ENCODE measurements at regions of chr2 and their contacts with region 1.

Region 1: GRCh38 chr2:224927646-224928173 is 114.6 kb downstream of the DOCK10 start:
- DNase-seq: peak; percentile 87
- ATAC-seq: peak; percentile 62
- H3K4me3 Mint-ChIP-seq: peak overlapping the region; percentile 46
- H3K27ac Mint-ChIP-seq: peak overlapping the region; percentile 94
- H3K4me1 Mint-ChIP-seq: peaks cover 96% of the 10 kb centered on the region
- H3K27me3 Mint-ChIP-seq: no peaks in the 10 kb centered on the region

Region 2: DNA sequence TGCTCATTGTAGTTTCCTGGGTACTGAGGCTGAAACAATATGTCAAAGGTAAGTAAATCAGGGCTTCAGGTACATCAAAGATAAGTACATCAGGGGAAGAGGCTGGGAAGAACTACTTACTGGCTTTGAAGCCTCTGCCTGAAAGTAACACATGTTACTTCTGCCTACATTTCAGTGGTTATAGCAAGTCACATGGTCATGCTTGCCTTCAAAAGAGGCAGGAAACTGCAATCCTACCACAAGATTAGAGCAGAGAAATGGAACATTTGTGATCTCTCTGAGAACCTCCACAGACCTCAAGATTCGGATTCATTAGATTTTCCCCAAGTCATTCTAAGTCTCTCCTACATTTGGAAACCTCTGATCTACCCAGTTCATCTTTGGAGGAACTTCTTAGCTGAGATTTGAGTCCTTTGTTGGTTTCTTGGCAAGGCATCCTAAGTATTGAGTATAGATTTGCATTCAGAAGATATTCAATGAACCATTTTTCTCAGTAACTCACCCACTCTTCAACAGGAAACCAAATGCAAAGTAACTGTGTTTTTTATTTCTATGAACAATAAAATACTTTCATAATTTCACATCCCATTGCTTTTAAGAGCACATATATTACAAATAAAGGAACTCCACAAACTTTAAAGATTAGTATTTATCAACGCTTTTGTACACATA is 163.0 kb before region 1 on chr2:
- CTCF ChIA-PET with region 1: no interaction called
- DNase-seq: no peak
- ATAC-seq: peak; percentile 23
- H3K4me3 Mint-ChIP-seq: no peak overlapping the region
- H3K27ac Mint-ChIP-seq: no peak overlapping the region
- H3K4me1 Mint-ChIP-seq: peaks cover 20% of the 10 kb centered on the region
- H3K27me3 Mint-ChIP-seq: no peaks in the 10 kb centered on the region

Region 3: DNA sequence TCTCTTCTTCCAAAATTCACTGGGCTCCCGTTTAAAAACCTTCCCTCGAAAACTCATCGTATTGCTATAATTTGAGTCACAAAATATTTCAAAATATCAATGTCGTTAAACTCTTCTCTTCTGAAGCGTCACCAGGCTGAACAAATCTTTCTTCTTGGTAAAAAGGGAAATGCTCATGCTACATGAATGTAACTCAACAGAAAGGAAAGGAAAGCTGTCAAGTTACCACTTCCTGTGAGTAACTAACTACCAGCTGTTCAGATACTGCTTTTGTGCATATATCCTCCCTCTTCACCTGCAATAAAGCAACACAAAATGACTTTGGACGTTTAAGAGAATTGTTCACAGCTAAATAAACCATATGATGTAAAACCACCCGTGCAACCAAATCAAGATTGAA is 19.2 kb after region 1 on chr2:
- CTCF ChIA-PET with region 1: interaction called, 132 read pairs
- DNase-seq: no peak
- ATAC-seq: peak; percentile 66
- H3K4me3 Mint-ChIP-seq: peak overlapping the region; percentile 86
- H3K27ac Mint-ChIP-seq: peak overlapping the region; percentile 96
- H3K4me1 Mint-ChIP-seq: peaks cover 64% of the 10 kb centered on the region
- H3K27me3 Mint-ChIP-seq: no peaks in the 10 kb centered on the region

Region 4: DNA sequence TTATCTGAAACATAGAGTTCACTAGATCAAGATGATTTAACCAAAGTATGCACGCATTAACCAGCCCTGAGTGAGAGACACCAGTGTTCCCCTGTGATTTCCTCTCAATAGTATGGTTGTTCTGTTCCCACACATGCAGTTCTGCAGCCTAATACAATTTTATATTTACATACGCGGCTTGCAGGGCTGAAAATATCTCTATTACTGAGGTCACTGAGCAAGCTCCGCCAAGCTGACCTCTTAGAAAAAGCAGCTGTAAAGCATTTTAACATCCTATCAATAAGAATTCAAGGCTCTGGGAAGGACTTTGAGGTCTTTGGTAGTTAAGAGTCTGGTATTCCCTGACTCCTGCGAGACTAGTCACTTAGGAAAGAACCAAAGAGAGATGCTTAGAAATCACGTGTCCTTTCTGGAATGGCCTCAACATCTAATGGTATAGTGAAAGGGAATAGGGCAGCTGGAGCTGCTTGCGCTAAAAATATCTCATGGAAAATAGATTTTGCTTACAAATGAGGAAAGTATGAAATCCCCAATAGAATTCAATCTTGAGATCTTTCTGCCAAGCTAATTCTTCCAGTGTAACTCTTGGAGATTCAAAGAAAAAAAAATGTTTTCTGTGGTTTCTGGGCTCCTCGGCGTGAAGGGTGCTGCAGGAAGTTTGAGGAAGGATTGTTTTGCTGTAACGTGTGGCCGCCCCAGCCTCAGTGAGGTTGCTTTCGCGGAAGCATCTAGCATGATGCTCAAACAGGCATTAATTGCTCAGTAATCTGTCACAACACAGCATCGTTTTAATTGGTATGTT is 55.4 kb after region 1 on chr2:
- CTCF ChIA-PET with region 1: interaction called, 11 read pairs
- DNase-seq: peak; percentile 74
- ATAC-seq: peak; percentile 63
- H3K4me3 Mint-ChIP-seq: peak overlapping the region; percentile 62
- H3K27ac Mint-ChIP-seq: peak overlapping the region; percentile 90
- H3K4me1 Mint-ChIP-seq: peaks cover 77% of the 10 kb centered on the region
- H3K27me3 Mint-ChIP-seq: no peaks in the 10 kb centered on the region

Measured in activated CD8-positive, alpha-beta memory T cell treated with anti-CD3 and anti-CD28 coated beads, Interleukin-2, amount 10 ng/mL, durations not matched to agents 7 days and 5 days (primary cell).